ENCODE measurements at regions of chr17 and their contacts with region 1.

Region 1: GRCh38 chr17:79393358-79394202 is 217.3 kb downstream of the RBFOX3 start:
- ATAC-seq: peak; percentile 75 to 87 (median 82)
- H3K4me3 ChIP-seq: no peak overlapping the region
- H3K27ac ChIP-seq: no peak overlapping the region
- H3K4me1 ChIP-seq: no peaks in the 10 kb centered on the region

Region 2: DNA sequence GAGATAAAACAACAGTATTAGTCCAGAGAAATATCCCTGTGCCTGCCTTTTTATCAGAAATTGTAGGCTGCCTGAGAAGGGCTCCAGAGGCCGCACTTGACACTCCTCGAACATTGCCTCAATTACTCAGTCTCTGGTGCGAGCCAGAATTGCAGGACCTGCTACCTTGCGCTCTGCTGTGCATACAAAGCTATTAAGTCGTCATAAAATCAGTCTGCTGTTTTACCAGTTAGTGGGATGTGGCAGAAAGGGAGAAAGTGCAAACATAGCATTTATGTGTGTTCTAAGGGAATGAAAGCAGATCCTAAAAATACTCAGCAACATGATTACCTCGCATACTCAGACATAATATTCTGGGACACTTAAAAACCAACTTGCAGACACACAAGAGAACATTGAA is 1335.6 kb before region 1 on chr17:
- in situ Hi-C with region 1: no loop called
- ATAC-seq: peak in 1 of 8 experiments; percentile 48
- H3K4me3 ChIP-seq: no peak overlapping the region
- H3K27ac ChIP-seq: no peak overlapping the region
- H3K4me1 ChIP-seq: peaks cover 0 to 5% of the 10 kb centered on the region in 2 donors

Region 3: GRCh38 chr17:79074650-79075445 is 318.7 kb before region 1 on chr17 and contains the start of gene ENGASE:
- in situ Hi-C with region 1: loop called in 5 of 9 experiments (anchors 10 to 25 kb)
- ATAC-seq: peak; percentile 95 to 98 (median 98)
- H3K4me3 ChIP-seq: peak within 1 kb of the TSS; percentile 52 to 86 (median 80)
- H3K27ac ChIP-seq: peak within 1 kb of the TSS; percentile 29 to 83
- H3K4me1 ChIP-seq: peaks cover 8 to 10% of the 10 kb centered on the region in 2 donors
- total RNA-seq, gene ENGASE: 10.0 to 49.6 (median 15.4) TPM

Region 4: DNA sequence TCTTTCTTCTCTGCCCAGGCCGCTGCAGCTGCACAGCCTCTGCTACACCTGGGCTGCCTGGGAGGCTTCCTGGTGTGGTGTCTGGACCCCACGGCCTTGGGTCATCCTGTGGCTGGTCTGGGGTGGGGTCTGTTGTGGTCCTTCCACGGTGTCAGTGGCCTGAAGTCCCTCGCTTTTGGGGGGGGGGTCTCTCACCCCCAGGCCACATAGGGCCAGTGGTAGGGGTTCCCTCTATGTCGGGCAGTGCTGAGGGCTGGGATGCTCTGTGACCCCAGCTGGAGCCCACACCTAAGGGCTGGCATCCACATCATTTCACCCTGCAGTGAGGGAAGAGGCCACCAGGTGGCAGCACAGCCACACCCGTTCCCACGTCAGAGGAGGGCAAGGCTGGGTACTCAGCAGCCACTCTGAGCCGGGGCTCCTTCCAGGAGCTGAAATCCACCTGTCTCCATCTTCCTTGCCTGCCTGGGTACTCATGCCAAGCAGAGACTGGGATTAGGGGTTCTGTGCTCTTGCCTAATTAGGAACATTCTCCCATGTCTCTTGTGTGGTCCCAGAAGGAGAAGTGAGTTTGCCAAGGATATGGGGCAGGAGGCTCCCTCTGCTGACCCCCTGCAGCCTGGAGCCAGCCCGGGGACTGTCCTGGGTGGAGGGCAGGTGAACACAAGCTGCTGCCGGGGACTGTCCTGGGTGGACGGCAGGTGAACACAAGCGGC is 306.0 kb before region 1 on chr17:
- in situ Hi-C with region 1: loop called in 6 of 9 experiments (anchors 10 to 25 kb)
- ATAC-seq: peak; percentile 59 to 80 (median 73)
- H3K4me3 ChIP-seq: no peak overlapping the region
- H3K27ac ChIP-seq: no peak overlapping the region
- H3K4me1 ChIP-seq: peaks cover 7 to 12% of the 10 kb centered on the region in 2 donors

Region 5: DNA sequence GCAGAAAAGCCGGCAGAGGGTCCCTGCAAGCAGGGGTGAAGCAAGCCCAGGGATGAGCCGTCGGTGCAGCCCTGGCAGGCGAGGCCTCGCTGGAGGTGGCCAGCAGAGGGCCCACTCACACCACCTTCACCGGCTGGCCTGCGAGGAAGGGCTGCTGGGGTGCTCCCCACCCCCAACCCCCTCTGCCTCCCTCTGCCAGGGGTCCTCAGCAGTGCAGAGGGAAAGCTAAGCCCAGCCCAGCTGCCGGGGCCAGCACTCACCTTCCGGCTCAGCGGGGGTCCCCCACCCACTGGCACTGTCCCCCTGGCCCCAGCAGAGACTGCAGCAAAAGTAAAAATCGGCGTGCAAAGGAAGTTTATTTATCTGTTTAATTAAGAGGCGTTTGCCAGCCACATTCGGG is 205.5 kb before region 1 on chr17:
- in situ Hi-C with region 1: loop called in 7 of 9 experiments (anchors 10 to 25 kb)
- ATAC-seq: peak; percentile 28 to 71 (median 38)
- H3K4me3 ChIP-seq: no peak overlapping the region
- H3K27ac ChIP-seq: no peak overlapping the region
- H3K4me1 ChIP-seq: peaks cover 6 to 17% of the 10 kb centered on the region in 2 donors

Region 6: DNA sequence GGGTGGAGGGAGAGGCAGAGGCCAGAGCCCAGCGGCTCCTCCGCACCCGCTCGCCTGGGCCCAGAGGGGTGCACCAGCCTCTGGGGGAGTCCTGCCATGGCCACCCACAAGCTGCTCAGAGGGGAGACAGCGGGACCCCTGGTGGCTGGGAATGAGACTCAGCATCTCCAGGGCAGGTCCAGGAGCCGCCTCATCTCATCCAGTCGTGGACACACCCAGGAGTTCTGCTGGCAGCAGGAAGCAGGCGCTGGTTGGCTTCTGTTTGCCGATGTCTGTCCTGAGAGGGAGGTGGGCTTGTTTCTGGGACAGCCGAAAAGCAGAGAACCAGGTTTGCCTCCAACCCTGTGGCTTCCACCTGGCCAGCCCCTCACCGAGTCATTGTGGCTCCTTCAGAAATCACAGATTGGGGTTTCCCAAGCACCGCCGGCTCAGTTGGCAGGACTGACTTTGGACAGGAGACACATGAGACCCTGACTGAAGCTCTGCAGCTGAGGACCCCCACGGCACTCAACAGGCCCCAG is 287.6 kb after region 1 on chr17:
- in situ Hi-C with region 1: no loop called
- ATAC-seq: peak in 1 of 8 experiments; percentile 37
- H3K4me3 ChIP-seq: no peak overlapping the region
- H3K27ac ChIP-seq: no peak overlapping the region
- H3K4me1 ChIP-seq: peaks cover 7 to 8% of the 10 kb centered on the region in 2 donors

Measured in motor neuron (in vitro differentiated cells).